ENCODE measurements at regions of chr17 and their contacts with region 1.

Region 1: GRCh38 chr17:66301797-66302741 is at the start of gene PRKCA:
- DNase-seq: peak; percentile 75 to 90 (median 79)
- ATAC-seq: peak; percentile 77 to 94 (median 90)
- H3K4me3 ChIP-seq: peak within 1 kb of the TSS; percentile 68 to 94 (median 85)
- H3K27ac ChIP-seq: peak within 1 kb of the TSS; percentile 38 to 90 (median 74)
- H3K4me1 ChIP-seq: peaks cover 0 to 32% (median 7%) of the 10 kb centered on the region in 12 donors
- H3K27me3 ChIP-seq: no peaks in the 10 kb centered on the region
- CTCF ChIP-seq: no peak
- POLR2A ChIP-seq: peak in 1 of 2 donors; percentile 79
- total RNA-seq, gene PRKCA: 4.8 to 26.8 (median 16.9) TPM

Region 2: DNA sequence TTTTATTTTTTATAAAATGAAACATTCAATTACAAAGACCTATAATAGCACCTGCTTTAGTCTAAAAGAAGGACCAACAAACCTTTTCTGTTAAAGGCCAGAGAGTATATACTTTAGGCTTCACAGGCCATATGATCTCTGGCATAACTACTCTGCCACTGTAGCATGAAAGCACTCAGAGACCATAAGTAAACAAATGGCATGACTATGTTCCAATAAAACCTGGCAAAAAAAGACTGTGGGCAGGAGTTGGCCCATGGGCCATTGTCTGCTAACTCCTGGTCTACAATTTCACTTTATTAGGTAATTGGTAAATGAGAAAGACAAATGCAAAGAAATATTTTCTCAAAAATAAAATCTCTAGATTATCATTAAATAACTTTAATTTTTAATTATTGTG is 125.0 kb before region 1 on chr17:
- intact Hi-C with region 1: no loop called
- DNase-seq: no peak
- ATAC-seq: no peak
- H3K4me3 ChIP-seq: no peak overlapping the region
- H3K27ac ChIP-seq: no peak overlapping the region
- H3K4me1 ChIP-seq: peaks cover 0 to 5% (median 0%) of the 10 kb centered on the region in 12 donors
- H3K27me3 ChIP-seq: no peaks in the 10 kb centered on the region
- CTCF ChIP-seq: no peak
- POLR2A ChIP-seq: no peak

Region 3: GRCh38 chr17:66191593-66192382 is 110.3 kb before region 1 on chr17 and contains the start of gene CEP112:
- intact Hi-C with region 1: loop called in 1 of 10 experiments (anchors 10 kb)
- DNase-seq: peak; percentile 76 to 91 (median 81)
- ATAC-seq: peak in 3 of 4 donors; percentile 86 to 93 (median 91)
- H3K4me3 ChIP-seq: peak within 1 kb of the TSS; percentile 71 to 92 (median 80)
- H3K27ac ChIP-seq: peak within 1 kb of the TSS; percentile 61 to 89 (median 74)
- H3K4me1 ChIP-seq: peaks cover 5 to 32% (median 17%) of the 10 kb centered on the region in 12 donors
- H3K27me3 ChIP-seq: no peaks in the 10 kb centered on the region
- CTCF ChIP-seq: peak in 2 of 12 donors; percentile 22 to 27
- POLR2A ChIP-seq: peak in 1 of 2 donors; percentile 53
- total RNA-seq, gene CEP112: 9.8 to 28.3 (median 14.3) TPM

Region 4: DNA sequence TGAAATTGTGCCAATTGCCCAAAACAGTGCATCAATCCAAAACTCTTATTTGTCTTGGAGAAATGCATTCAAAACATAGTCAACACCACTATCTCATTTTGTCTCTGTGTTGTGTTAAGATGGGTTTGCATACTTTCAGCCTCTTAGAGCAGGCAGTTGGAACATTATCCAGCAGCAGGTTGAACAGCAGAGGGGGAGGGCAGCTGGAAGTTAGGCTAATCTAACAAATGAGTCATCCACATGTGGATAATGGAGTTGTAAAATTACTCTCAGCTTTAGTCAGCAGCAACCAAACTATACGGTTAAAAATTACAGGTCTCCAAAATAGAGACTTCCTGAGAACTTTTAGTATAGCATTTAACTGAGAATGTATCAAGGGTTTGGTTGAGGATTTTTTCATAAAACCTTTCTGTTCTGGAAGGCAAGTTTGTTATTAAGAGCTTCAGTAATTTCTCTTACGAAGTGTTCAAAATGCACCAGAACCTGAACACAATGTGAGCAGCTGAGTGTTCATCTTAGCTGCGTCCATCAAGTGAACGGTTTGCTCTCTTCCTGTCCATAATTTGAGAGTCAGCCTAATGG is 46.6 kb after region 1 on chr17:
- intact Hi-C with region 1: loop called in 1 of 10 experiments (anchors 5 kb)
- DNase-seq: peak in 4 of 5 donors; percentile 36 to 44 (median 38)
- ATAC-seq: peak; percentile 83 to 94 (median 90)
- H3K4me3 ChIP-seq: no peak overlapping the region
- H3K27ac ChIP-seq: peak overlapping the region in 3 of 12 donors; percentile 13 to 35 (median 28)
- H3K4me1 ChIP-seq: peaks cover 0 to 34% (median 16%) of the 10 kb centered on the region in 12 donors
- H3K27me3 ChIP-seq: no peaks in the 10 kb centered on the region
- CTCF ChIP-seq: no peak
- POLR2A ChIP-seq: no peak

Region 5: GRCh38 chr17:66526827-66527226 is 224.8 kb after region 1 on chr17:
- intact Hi-C with region 1: loop called in 1 of 10 experiments (anchors 5 kb)
- DNase-seq: no peak
- ATAC-seq: no peak
- H3K4me3 ChIP-seq: no peak overlapping the region
- H3K27ac ChIP-seq: no peak overlapping the region
- H3K4me1 ChIP-seq: peaks cover 0 to 26% (median 0%) of the 10 kb centered on the region in 12 donors
- H3K27me3 ChIP-seq: no peaks in the 10 kb centered on the region
- CTCF ChIP-seq: no peak
- POLR2A ChIP-seq: no peak

Region 6: DNA sequence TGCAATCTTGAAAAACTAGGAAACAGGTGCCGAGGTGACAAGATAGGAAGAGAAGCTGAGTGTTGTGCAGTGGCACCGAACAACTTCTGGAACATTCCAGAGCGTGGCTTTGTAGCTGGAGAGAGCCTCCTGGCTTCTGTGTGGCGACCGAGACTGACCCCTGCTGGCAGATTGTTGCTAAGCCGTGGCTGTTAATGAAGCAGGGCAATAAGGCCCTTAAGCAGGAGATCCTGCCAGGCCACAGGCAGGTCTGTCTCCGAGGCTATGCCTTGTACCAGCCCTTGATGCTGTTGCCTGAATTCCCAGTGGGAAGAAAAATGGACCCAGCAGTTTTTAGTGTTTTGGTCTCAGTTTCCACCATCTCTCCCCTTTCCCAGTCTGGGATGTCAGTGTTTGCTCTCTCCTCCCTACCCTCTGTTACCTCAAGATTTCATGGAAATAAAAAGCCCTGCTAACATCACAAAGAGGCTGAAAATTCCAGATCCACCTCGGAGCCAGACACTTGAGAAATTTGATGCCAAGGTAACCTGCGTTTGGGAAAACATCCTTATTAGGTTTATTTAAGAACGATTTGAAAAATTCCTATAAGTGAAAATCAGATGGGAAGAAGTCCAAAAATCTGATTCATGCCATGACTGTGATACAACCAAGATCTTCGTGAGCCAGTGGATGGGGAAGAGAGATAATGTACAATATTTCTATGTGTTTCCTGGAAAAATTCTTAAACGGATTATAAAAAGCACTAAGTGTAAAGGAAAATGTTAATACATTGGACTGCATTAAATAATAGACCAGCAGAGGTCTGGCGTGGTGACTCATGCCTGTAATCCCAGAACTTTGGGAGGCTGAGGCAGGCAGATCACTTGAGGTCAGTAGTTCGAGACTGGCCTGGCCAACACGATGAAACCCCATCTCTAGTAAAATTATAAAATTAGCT is 265.4 kb after region 1 on chr17:
- intact Hi-C with region 1: loop called in 1 of 10 experiments (anchors 10 kb)
- DNase-seq: peak; percentile 69 to 86 (median 70)
- ATAC-seq: peak; percentile 61 to 86 (median 82)
- H3K4me3 ChIP-seq: no peak overlapping the region
- H3K27ac ChIP-seq: no peak overlapping the region
- H3K4me1 ChIP-seq: peaks cover 0 to 8% (median 0%) of the 10 kb centered on the region in 12 donors
- H3K27me3 ChIP-seq: no peaks in the 10 kb centered on the region
- CTCF ChIP-seq: peak; percentile 64 to 81 (median 75)
- POLR2A ChIP-seq: no peak

Measured in heart left ventricle (tissue), 16 donors.